ENCODE measurements at regions of chr5 and their contacts with region 1.

Region 1: DNA sequence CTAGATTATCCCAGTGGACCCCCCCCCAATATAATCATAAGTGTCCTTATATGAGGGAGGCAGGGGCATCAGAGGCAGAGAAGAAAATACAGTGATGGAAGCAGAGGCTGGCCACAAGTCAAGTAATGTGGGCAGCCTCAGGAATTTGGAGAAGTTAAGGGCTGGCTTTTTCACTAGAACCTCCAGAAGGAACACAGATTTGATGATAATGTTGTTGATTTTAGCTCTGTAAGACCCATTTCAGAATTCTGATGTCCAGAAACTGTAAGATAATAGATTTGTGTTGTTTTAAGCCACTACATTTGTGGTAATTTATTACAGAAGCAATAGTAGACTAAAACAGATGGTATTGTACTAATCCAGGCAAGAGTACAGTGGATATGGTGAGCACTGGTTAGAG is 36.3 kb upstream of the LRRTM2 start:
- DNase-seq: no peak

Region 2: DNA sequence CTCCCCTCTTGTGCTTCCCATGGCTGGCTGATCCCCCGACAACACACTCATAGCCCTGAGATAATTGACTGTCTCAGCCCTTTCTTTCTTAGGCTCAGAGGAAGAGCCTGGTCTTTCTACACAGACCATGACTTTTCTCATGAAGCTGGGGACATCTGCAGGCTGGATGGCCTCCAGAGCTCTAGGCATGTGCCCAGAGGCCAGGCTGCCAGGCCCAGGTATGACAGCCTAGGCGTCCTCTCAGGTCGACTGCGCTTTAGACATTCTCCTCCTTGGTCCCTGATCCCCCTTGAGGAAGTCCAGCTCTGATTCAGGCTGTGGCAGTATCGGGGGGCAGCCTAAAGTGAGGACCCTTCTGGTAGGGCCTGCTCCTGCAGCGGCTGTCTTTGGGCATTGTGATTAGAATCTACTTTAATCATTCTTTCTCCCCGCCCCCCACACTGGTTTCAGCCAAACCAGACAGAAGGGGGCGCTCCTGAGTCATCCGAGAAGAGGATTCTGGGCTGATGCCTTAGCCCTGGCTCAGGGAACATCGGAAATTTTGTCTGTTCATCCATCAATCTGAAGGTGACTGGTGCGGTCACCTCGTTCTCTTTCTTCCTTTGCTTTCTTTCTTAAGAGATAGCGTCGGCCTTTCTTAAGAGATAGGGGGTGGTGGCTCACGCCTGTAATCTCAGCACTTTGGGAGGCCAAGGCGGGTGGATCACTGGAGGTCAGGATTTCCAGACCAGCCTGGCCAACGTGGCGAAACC is 269.7 kb before region 1 on chr5:
- intact Hi-C with region 1: loop called (anchors 10 kb)
- DNase-seq: peak; percentile 37 to 95 (median 80)

Measured in posterior cingulate gyrus (tissue), 11 donors.